ENCODE measurements at regions of chr12 and their contacts with region 1.

Region 1: GRCh38 chr12:32302218-32303173 is 96.9 kb upstream of the FGD4 start:
- DNase-seq: no peak
- H3K4me3 ChIP-seq: no peak overlapping the region
- H3K27ac ChIP-seq: no peak overlapping the region
- H3K4me1 ChIP-seq: no peaks in the 10 kb centered on the region
- H3K27me3 ChIP-seq: no peaks in the 10 kb centered on the region
- CTCF ChIP-seq: peak in 1 of 4 experiments; percentile 16
- EP300 ChIP-seq: no peak
- POLR2A ChIP-seq: no peak

Region 2: GRCh38 chr12:31959161-31959700 is 343.3 kb before region 1 on chr12 and contains the start of gene RESF1:
- intact Hi-C with region 1: loop called (anchors 10 kb)
- DNase-seq: peak; percentile 91
- H3K4me3 ChIP-seq: peak within 1 kb of the TSS; percentile 67 to 79 (median 72)
- H3K27ac ChIP-seq: peak within 1 kb of the TSS; percentile 92 to 97 (median 94)
- H3K4me1 ChIP-seq: peaks cover 0 to 36% (median 24%) of the 10 kb centered on the region in 4 donors
- H3K27me3 ChIP-seq: no peaks in the 10 kb centered on the region
- CTCF ChIP-seq: no peak
- EP300 ChIP-seq: no peak
- POLR2A ChIP-seq: peak; percentile 40 to 62
- total RNA-seq, gene RESF1: 33.5 to 49.4 (median 41.2) TPM

Region 3: DNA sequence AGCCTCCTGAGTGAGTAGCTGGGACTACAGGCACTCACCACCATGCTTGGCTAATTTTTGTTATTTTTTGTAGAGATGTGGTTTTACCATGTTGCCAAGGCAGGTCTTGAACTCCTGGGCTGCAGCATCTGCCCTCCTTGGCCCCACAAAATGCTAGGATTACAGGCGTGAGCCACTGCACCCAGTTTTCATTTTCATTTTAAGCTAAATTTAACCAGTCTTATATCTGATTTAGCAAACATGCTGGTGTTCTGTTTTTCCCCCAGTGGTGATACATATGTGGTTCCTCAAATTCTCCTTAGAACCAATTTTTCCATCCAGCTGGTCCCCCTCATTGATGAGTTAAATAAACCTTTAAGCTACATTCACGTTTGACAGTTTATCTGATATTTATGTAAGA is 239.6 kb before region 1 on chr12:
- intact Hi-C with region 1: loop called (anchors 5 kb)
- DNase-seq: no peak
- H3K4me3 ChIP-seq: no peak overlapping the region
- H3K27ac ChIP-seq: no peak overlapping the region
- H3K4me1 ChIP-seq: no peaks in the 10 kb centered on the region
- H3K27me3 ChIP-seq: no peaks in the 10 kb centered on the region
- CTCF ChIP-seq: no peak
- EP300 ChIP-seq: no peak
- POLR2A ChIP-seq: no peak

Region 4: GRCh38 chr12:32399337-32400113 is 97.0 kb after region 1 on chr12 and contains the start of gene FGD4:
- intact Hi-C with region 1: no loop called
- DNase-seq: peak; percentile 87
- H3K4me3 ChIP-seq: peak within 1 kb of the TSS; percentile 53 to 66 (median 59)
- H3K27ac ChIP-seq: peak within 1 kb of the TSS; percentile 51 to 82 (median 60)
- H3K4me1 ChIP-seq: peaks cover 0 to 19% (median 11%) of the 10 kb centered on the region in 4 donors
- H3K27me3 ChIP-seq: peaks cover 0 to 20% (median 5%) of the 10 kb centered on the region in 3 donors
- CTCF ChIP-seq: peak in 1 of 4 experiments; percentile 15
- EP300 ChIP-seq: no peak
- POLR2A ChIP-seq: peak in 1 of 2 donors; percentile 75
- total RNA-seq, gene FGD4: 11.3 to 19.1 (median 17.0) TPM